Calu3 (cell line): ENCODE measurements at regions of chr17 and their contacts with region 1.

Region 1: GRCh38 chr17:71237903-71238538 is 882.8 kb upstream of the SOX9 start:
- DNase-seq: no peak
- H3K4me3 Mint-ChIP-seq: no peak overlapping the region
- H3K27ac Mint-ChIP-seq: no peak overlapping the region
- H3K4me1 Mint-ChIP-seq: peaks cover 10% of the 10 kb centered on the region
- H3K27me3 Mint-ChIP-seq: no peaks in the 10 kb centered on the region
- CTCF ChIP-seq: no peak

Region 2: DNA sequence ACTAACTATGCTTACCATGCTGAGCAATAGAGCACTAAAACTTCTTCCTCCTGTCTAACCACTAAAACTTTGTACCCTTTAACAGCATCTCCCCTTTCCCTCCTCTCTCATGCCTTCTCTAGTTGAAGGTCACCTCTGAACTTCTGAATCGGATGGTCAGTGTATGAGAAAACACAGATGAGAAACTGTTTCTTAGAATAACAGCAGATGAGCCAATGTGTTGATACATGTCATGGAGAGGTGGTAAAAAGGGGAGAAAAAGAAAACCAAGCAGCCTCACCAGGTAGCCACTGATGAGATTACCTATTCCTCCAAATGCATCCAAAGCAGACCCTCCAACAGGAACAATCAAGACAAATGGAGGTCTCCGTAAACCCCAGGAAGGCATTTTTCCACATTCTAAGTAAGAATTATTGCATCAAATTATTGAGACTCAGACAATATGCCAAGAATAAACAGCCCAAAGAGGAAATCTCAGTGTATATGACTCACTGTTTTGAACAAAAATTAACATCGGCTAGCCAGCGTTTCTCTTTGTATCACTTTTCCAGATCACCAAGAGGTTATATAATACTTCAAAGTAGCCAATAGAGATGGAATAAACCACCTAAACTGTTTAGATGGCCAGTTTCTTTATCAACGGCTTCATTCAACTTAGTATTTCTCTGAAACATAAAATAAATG is 89.5 kb after region 1 on chr17:
- CTCF ChIA-PET with region 1: no interaction called
- intact Hi-C with region 1: loop called (anchors 5 kb)
- DNase-seq: no peak
- H3K4me3 Mint-ChIP-seq: peak overlapping the region; percentile 13
- H3K27ac Mint-ChIP-seq: peak overlapping the region; percentile 81
- H3K4me1 Mint-ChIP-seq: peaks cover 39% of the 10 kb centered on the region
- H3K27me3 Mint-ChIP-seq: no peaks in the 10 kb centered on the region
- CTCF ChIP-seq: no peak

Region 3: GRCh38 chr17:71423871-71424546 is 186.0 kb after region 1 on chr17:
- CTCF ChIA-PET with region 1: no interaction called
- intact Hi-C with region 1: loop called (anchors 5 kb)
- DNase-seq: peak; percentile 67
- H3K4me3 Mint-ChIP-seq: peak overlapping the region; percentile 7
- H3K27ac Mint-ChIP-seq: peak overlapping the region; percentile 89
- H3K4me1 Mint-ChIP-seq: peaks cover 25% of the 10 kb centered on the region
- H3K27me3 Mint-ChIP-seq: no peaks in the 10 kb centered on the region
- CTCF ChIP-seq: peak; percentile 31

Region 4: DNA sequence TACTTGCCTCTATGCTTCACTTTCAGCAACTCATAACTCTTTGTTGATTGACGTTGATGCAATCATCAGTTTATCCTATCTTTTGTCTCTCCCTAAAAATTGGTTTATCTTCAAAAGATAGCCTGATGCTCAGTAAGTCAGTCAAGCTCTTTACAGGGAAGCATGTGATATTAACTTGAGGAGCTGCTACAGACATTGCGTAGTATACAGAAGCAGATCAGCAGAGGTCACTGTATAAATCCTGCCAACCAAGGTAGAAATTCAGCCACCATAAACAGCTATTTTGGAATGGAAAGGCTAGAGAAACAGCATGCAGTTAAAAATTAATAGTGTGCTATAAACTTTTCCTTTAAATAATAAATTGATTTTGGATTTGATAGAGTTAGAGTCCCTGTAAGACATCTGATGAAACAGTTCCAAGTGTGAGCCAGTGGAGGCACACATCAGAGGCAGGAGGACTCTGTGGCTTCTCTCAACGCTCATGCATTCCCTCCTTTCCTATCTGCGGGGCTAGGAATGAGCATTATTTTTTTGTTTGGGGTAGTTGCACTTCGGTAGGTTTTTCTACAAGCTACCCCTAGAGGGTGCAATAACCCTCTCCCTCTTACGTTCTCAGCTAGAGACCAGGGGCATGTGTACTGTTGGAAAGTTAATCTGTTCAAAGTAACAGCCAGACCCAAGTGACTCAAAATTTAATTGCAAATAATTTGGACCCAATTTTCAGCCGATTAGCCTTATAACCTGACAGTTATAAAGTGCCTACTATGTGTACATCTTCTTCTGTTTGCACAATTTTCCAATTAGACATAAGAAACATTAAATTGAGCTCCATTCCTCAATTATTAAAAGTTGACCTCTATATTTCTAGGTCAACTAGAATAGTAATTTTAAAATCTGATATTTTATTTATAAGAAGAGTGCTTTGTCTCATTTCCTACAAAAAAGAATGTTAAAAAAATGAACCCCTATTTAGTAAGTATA is 235.1 kb after region 1 on chr17:
- CTCF ChIA-PET with region 1: no interaction called
- intact Hi-C with region 1: loop called (anchors 1 kb)
- DNase-seq: peak; percentile 57
- H3K4me3 Mint-ChIP-seq: no peak overlapping the region
- H3K27ac Mint-ChIP-seq: no peak overlapping the region
- H3K4me1 Mint-ChIP-seq: peaks cover 27% of the 10 kb centered on the region
- H3K27me3 Mint-ChIP-seq: no peaks in the 10 kb centered on the region
- CTCF ChIP-seq: peak; percentile 68

Region 5: GRCh38 chr17:71633391-71633849 is 395.4 kb after region 1 on chr17:
- CTCF ChIA-PET with region 1: no interaction called
- intact Hi-C with region 1: loop called (anchors 10 kb)
- DNase-seq: peak; percentile 21
- H3K4me3 Mint-ChIP-seq: peak overlapping the region; percentile 2
- H3K27ac Mint-ChIP-seq: no peak overlapping the region
- H3K4me1 Mint-ChIP-seq: peaks cover 29% of the 10 kb centered on the region
- H3K27me3 Mint-ChIP-seq: no peaks in the 10 kb centered on the region
- CTCF ChIP-seq: no peak

Region 6: DNA sequence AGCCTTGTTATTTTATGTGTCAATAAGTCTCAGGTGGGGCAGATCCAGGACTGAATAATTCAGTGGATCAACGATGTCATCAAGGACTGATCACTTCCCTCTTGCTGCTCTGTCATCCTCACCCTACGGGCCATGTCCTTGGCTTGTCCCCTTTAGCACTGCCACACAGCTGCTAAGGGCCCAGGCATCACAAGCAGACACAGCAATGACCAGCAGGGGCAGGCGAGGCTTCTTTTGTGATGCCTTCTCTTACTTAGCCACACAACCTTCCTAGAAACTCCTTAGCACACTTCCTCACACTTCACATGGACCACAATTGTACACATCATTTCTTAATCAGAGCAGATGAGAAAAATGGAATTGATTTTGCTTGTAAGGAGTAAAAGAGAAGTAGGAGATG is 526.5 kb after region 1 on chr17:
- CTCF ChIA-PET with region 1: no interaction called
- intact Hi-C with region 1: loop called (anchors 10 kb)
- DNase-seq: peak; percentile 43
- H3K4me3 Mint-ChIP-seq: no peak overlapping the region
- H3K27ac Mint-ChIP-seq: no peak overlapping the region
- H3K4me1 Mint-ChIP-seq: peaks cover 9% of the 10 kb centered on the region
- H3K27me3 Mint-ChIP-seq: no peaks in the 10 kb centered on the region
- CTCF ChIP-seq: peak; percentile 52

Region 7: GRCh38 chr17:72219137-72219823 is 981.3 kb after region 1 on chr17:
- CTCF ChIA-PET with region 1: no interaction called
- intact Hi-C with region 1: no loop called
- DNase-seq: no peak
- H3K4me3 Mint-ChIP-seq: no peak overlapping the region
- H3K27ac Mint-ChIP-seq: no peak overlapping the region
- H3K4me1 Mint-ChIP-seq: no peaks in the 10 kb centered on the region
- H3K27me3 Mint-ChIP-seq: no peaks in the 10 kb centered on the region
- CTCF ChIP-seq: no peak